ENCODE measurements at regions of chr3 and their contacts with region 1.

Region 1: DNA sequence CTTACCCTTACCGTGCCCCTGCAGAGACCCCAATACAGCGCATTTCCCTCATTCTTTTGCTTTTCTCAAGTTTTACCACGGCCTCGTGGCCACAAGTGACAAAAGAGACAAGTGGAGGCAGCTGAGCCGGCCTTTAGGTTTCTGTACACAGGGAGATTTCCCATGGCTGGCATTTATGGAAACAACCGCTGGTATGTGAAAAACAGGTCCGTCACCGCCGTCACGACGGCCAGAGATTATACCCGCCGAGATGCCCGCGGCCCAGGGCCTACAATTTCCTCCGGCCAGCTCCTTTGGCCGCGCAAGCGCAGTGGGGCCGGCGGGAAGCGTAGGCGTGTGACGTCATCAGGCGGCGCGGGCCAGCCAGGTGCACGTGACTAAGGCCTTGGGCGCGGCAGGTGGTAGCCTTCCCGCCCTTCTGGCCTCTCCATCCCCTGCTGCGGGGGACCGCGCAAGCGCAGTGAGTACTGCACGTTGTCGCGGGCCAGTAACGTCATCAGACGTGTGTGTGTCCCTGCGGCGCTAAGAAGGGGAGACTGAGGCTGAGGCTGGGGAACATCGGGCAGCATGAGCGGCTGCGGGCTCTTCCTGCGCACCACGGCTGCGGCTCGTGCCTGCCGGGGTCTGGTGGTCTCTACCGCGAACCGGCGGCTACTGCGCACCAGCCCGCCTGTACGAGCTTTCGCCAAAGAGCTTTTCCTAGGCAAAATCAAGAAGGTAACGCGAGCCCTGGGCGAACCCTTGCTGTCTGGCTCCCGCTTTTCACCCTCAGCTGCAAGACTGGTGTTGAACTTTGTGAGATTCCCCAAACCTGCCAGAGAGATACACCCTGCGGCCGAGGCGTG is at the start of gene ACAD9:
- DNase-seq: peak; percentile 98
- H3K4me3 Mint-ChIP-seq: peak within 1 kb of the TSS; percentile 82
- H3K27ac Mint-ChIP-seq: peak within 1 kb of the TSS; percentile 92
- H3K4me1 Mint-ChIP-seq: peaks cover 37% of the 10 kb centered on the region
- H3K27me3 Mint-ChIP-seq: no peaks in the 10 kb centered on the region
- CTCF ChIP-seq: no peak
- total RNA-seq, gene ACAD9: 43.1 and 44.7 TPM in 2 replicates

Region 2: GRCh38 chr3:128650096-128651050 is 229.0 kb before region 1 on chr3 and contains the start of gene RPN1:
- CTCF ChIA-PET with region 1: interaction called, 5 read pairs
- POLR2A ChIA-PET with region 1: interaction called, 27 read pairs
- intact Hi-C with region 1: no loop called
- DNase-seq: peak; percentile 94
- H3K4me3 Mint-ChIP-seq: peak within 1 kb of the TSS; percentile 80
- H3K27ac Mint-ChIP-seq: peak within 1 kb of the TSS; percentile 89
- H3K4me1 Mint-ChIP-seq: no peaks in the 10 kb centered on the region
- H3K27me3 Mint-ChIP-seq: no peaks in the 10 kb centered on the region
- CTCF ChIP-seq: no peak
- total RNA-seq, gene RPN1: 212 and 240 TPM in 2 replicates

Region 3: DNA sequence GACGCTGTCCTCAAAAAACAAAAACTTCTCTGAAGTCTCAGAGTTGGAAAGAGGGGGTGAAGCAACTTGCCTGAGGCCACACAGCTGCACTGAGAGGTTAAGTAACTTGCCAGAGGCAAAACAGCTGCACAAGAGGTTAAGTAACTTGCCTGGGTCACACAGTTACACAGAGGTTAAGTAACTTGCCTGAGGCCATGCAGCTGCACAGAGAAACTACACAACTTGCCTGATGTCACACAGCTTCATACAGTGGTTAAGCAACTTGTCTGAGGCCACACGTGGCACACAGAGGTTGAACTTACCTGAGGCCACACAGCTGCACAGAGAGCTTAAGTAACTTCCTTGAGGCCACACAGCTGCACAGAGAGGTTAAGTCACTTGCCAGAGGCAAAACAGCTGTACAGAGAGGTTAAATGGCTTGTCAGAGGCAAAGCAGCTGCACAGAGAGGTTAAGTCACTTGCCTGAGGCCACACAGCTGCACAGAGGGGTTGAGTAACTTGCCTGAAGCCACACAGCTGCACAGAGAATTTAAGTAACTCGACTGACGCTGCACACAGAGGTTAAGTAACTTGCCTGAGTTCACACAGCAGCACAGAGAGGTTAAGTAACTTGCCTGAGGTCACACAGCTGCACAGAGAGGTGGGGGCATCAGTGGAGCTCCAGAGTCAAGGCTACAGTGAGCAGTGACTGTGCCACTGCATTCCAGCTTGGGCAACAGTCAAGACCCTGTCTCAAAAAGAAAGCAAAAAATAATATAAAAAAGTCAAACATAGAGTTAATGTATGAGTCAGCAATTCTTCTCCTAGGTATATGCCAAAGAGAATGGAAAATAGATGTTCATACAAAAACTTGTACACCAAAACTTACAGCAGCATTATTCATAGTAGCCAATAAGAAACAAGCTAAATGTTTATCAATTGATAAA is 11.9 kb before region 1 on chr3:
- CTCF ChIA-PET with region 1: interaction called, 6 read pairs
- POLR2A ChIA-PET with region 1: interaction called, 21 read pairs
- intact Hi-C with region 1: no loop called
- DNase-seq: peak; percentile 65
- H3K4me3 Mint-ChIP-seq: no peak overlapping the region
- H3K27ac Mint-ChIP-seq: peak overlapping the region; percentile 71
- H3K4me1 Mint-ChIP-seq: peaks cover 7% of the 10 kb centered on the region
- H3K27me3 Mint-ChIP-seq: no peaks in the 10 kb centered on the region
- CTCF ChIP-seq: no peak

Region 4: DNA sequence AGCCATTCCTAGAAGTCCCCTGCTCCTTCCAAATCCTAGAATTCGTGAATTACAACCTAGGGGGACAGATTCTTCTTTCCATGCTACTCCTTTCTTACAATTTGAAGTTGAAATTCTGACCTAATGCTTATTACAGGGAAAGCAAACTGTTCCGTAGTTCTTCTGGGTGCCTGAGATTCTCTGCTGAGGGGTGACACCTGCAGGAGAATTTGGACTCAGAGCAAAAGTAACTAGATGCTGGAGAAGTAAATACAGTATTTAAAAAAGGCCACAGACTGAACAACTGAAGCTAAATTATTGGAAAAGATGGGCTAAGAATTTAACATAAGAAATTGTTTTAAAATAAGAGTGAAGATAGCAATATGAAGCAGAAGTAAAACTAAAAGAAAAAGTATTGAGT is 37.9 kb after region 1 on chr3:
- CTCF ChIA-PET with region 1: no interaction called
- POLR2A ChIA-PET with region 1: interaction called, 10 read pairs
- intact Hi-C with region 1: no loop called
- DNase-seq: no peak
- H3K4me3 Mint-ChIP-seq: no peak overlapping the region
- H3K27ac Mint-ChIP-seq: no peak overlapping the region
- H3K4me1 Mint-ChIP-seq: no peaks in the 10 kb centered on the region
- H3K27me3 Mint-ChIP-seq: no peaks in the 10 kb centered on the region
- CTCF ChIP-seq: no peak

Region 5: DNA sequence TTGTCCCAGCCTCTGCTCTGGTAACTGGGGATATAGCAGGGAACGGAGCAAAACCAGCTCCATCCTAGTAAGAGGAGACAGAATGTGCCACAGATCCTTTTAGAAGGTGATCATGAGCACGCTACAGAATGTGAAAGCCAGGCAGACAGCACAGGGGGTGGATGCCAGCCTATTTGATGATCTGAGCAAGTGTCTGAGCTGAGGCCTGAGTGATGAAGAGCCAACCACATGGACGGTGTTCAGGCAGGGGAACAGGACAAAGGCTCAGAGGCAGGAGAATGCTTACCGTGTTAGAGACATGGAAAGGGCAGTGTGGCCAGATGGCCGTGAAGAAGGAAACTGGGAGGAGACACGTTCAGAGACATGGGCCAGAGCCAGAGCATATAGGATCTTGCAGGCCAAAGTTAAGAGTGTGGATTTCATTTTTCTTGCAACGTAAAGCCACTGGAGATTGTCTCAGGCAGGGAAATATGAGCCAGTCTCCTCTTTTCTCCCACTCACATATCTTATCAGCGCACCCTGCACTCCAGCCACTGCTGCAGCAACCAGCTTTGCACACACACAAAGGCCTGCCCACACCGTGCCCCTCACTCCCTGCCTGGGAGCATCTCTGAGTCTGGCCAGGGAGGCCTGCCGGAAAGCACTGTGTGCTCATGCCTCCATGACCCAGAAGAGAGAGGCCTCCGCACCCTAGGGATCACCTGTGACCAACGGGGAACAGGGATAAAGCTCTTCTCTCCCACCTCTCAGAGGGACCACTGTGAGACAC is 222.2 kb after region 1 on chr3:
- CTCF ChIA-PET with region 1: no interaction called
- POLR2A ChIA-PET with region 1: no interaction called
- intact Hi-C with region 1: no loop called
- DNase-seq: no peak
- H3K4me3 Mint-ChIP-seq: no peak overlapping the region
- H3K27ac Mint-ChIP-seq: no peak overlapping the region
- H3K4me1 Mint-ChIP-seq: no peaks in the 10 kb centered on the region
- H3K27me3 Mint-ChIP-seq: no peaks in the 10 kb centered on the region
- CTCF ChIP-seq: no peak

Region 6: DNA sequence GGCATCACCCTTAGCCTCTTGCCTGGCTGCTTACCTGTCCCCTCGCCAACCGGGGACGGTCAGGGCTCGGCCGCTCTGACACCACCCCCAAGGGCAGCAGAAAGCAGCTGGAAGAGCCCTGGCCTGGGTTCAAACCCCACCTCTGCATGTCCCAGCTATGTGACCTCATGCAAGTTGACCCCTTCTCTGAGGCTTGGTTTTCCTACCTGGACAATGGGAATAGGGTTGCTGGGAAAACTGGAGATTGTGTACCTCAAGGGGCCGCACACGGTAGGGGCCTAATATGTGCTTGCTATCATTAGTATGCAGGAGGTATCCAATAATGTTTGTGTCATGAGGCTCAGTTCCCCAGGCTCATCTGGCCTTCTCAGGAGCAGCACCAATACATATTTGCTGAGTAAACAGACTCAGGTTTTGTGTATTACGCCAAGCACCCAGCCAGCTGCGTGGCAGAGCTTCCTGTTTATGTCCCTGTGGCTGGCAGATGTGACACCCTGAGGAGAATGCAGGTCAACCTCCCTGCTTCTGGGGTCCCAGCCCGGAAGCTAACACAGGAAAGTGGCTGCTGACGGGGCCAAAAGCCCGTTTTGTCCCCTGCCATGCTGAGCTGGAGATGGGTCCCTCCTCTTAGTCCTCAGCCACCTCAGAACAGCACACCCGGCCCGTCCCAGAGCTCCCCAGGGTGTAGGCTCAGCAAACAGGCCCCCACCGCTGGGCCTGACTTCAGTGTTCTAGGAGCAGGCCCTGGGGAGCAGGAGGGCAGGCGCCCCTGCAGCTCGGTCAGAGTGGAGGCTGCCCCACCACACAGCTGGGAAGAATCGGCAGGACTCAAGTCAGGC is 697.4 kb after region 1 on chr3:
- CTCF ChIA-PET with region 1: no interaction called
- POLR2A ChIA-PET with region 1: no interaction called
- intact Hi-C with region 1: no loop called
- DNase-seq: no peak
- H3K4me3 Mint-ChIP-seq: no peak overlapping the region
- H3K27ac Mint-ChIP-seq: no peak overlapping the region
- H3K4me1 Mint-ChIP-seq: no peaks in the 10 kb centered on the region
- H3K27me3 Mint-ChIP-seq: no peaks in the 10 kb centered on the region
- CTCF ChIP-seq: no peak